Dorsolateral prefrontal cortex (tissue), 120 donors: ENCODE measurements at regions of chr3 and their contacts with region 1.

Region 1: GRCh38 chr3:177359593-177360357 is 162.5 kb upstream of the TBL1XR1 start:
- DNase-seq: peak; percentile 84 to 96 (median 92)
- H3K4me3 ChIP-seq: peak overlapping the region; percentile 35 to 75 (median 56)
- H3K27ac ChIP-seq: peak overlapping the region; percentile 65 to 97 (median 93)
- H3K27me3 ChIP-seq: no peaks in the 10 kb centered on the region
- CTCF ChIP-seq: peak in 32 of 56 donors; percentile 2 to 48 (median 26)

Region 2: DNA sequence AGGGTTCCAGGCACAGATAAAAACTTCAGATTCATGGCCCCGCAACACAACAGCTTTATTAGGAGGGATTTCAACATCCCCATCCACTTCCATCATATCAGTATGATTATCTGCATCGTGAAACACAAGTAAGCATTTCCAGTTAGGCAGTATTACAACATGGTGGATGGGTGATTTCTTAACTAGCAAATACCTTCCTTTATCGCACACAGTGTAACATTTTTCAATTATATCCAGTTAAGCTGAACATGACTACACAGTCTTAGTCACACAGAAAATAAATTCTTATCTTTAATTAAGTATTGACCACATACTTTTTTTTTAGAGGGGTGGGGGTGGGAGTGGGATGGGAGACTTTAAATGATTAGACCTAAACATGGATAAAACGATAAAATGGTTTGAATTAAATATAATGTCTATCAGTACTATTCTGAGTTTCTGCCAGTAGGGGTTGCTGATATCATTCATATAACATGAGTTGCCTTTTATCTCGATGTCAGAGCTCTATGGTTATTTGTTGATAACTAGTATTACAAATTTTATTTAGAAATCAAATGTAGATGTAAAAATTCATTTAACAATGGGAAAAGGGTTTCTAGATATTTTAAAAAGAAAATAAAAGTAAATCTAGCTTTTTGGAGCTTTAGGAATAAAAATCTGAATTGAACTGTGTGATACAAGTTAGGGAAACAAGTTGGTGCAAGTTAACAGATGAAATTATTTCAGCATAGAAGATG is 309.1 kb before region 1 on chr3:
- intact Hi-C with region 1: loop called (anchors 1 to 5 kb)
- DNase-seq: no peak
- H3K4me3 ChIP-seq: peak overlapping the region in 27 of 59 donors; percentile 6 to 50 (median 28)
- H3K27ac ChIP-seq: peak overlapping the region in 57 of 59 donors; percentile 8 to 91 (median 77)
- H3K27me3 ChIP-seq: no peaks in the 10 kb centered on the region
- CTCF ChIP-seq: peak; percentile 53 to 82 (median 74)

Region 3: GRCh38 chr3:177229791-177230190 is 130.0 kb before region 1 on chr3:
- intact Hi-C with region 1: no loop called
- DNase-seq: no peak
- H3K4me3 ChIP-seq: no peak overlapping the region
- H3K27ac ChIP-seq: peak overlapping the region in 7 of 59 donors; percentile 7 to 53 (median 16)
- H3K27me3 ChIP-seq: no peaks in the 10 kb centered on the region
- CTCF ChIP-seq: no peak

Region 4: DNA sequence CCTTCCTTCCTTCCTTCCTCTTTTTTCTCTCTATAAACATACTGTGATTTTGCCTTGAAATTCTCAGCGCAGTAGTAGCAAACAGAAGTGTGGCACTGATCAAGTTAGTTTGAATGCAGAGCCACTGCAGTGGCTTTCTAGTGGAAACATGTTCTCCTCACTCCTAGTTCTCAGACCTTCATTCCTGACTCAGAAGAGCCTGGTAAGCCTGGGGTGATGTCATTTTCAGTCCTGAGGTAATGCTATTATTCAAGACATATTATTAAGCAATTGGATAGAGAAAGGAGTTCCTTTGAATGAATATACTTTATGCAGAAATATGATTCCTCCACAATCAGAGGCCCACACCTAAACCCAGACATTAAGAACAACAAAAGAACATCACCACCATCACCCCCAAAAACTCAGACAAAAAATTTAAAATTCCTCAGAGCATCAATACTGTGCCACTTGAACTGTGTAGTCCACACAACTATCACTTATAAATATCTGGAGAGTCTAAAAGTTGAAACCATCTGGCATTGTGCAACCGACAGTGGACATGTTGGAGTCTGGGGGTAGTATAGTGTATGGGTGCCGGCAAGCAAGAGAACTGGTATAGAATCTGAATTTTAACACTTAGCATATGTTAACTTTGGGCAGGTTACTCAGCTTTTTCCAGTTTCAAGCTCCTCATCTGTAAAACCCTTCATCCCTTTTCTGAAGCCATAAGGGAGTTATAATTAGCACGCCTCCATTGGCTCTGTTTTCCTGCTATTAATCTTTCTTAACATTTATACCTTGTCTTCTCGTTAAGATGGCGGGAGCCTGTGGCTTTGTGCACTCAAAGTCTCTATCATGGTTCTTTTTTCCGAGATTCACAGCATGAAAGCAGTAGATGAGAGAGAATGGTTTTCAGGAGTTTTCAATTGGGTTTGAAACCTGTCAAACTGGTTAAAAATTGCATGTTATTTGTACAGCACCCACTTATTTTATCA is 93.0 kb after region 1 on chr3:
- intact Hi-C with region 1: loop called in 1 of 2 experiments (anchors 10 kb)
- DNase-seq: no peak
- H3K4me3 ChIP-seq: peak overlapping the region in 1 of 59 donors; percentile 25
- H3K27ac ChIP-seq: peak overlapping the region in 22 of 59 donors; percentile 8 to 82 (median 58)
- H3K27me3 ChIP-seq: no peaks in the 10 kb centered on the region
- CTCF ChIP-seq: no peak

Region 5: DNA sequence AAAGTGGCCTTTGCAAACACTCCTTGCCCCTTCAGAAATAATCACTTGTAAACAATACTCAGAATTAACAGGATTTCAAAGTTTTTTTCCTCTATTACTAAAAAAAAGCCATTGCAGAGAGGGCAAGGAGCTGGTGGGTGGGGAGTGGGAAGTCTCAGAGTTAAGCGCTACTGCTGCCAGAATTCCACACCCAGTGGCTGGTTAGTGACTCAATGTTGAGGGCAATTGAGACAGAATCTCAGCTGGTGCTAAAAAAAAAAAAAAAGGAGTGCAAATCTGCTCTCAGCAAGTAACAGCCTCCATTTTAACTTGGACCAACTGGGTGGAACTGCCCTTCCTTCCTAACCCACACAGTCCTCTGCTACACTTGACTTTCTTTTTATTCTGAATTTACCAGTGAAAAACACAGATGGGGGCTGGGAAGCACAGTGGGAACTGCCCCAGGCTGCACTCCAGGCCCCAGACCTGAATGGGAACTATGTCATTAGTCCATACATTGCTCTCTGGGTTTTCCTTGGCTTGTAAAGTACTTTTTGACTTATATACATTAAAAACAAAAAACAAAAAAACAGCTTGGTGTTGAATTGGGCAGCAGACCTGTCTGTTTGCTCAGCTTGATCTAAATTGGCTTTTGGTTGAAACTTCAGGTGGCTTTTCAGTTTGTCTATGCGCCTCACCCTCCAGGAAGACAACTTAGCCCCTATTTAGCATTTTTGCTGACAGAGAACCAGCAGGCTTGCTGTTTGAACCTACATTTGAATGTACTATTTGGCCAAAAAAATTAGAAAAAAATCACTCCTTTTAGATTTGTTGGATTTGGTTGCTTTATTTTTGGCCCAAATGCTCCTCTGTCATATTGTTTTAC is 195.4 kb after region 1 on chr3:
- intact Hi-C with region 1: loop called in 1 of 2 experiments (anchors 10 kb)
- DNase-seq: peak in 5 of 10 donors; percentile 21 to 63 (median 54)
- H3K4me3 ChIP-seq: no peak overlapping the region
- H3K27ac ChIP-seq: peak overlapping the region in 31 of 59 donors; percentile 1 to 91 (median 77)
- H3K27me3 ChIP-seq: no peaks in the 10 kb centered on the region
- CTCF ChIP-seq: no peak

Region 6: GRCh38 chr3:177777699-177778098 is 417.9 kb after region 1 on chr3:
- intact Hi-C with region 1: loop called in 1 of 2 experiments (anchors 5 kb)
- DNase-seq: peak in 7 of 10 donors; percentile 16 to 73 (median 44)
- H3K4me3 ChIP-seq: no peak overlapping the region
- H3K27ac ChIP-seq: no peak overlapping the region
- H3K27me3 ChIP-seq: no peaks in the 10 kb centered on the region
- CTCF ChIP-seq: peak; percentile 21 to 79 (median 63)

Region 7: GRCh38 chr3:178385280-178385952 is 1025.6 kb after region 1 on chr3:
- intact Hi-C with region 1: loop called in 1 of 2 experiments (anchors 5 kb)
- DNase-seq: peak in 3 of 10 donors; percentile 34 to 44 (median 40)
- H3K4me3 ChIP-seq: peak overlapping the region in 11 of 59 donors; percentile 1 to 24 (median 11)
- H3K27ac ChIP-seq: peak overlapping the region in 35 of 59 donors; percentile 0 to 83 (median 48)
- H3K27me3 ChIP-seq: no peaks in the 10 kb centered on the region
- CTCF ChIP-seq: peak; percentile 70 to 96 (median 85)